ENCODE measurements at regions of chr11 and their contacts with region 1.

Region 1: DNA sequence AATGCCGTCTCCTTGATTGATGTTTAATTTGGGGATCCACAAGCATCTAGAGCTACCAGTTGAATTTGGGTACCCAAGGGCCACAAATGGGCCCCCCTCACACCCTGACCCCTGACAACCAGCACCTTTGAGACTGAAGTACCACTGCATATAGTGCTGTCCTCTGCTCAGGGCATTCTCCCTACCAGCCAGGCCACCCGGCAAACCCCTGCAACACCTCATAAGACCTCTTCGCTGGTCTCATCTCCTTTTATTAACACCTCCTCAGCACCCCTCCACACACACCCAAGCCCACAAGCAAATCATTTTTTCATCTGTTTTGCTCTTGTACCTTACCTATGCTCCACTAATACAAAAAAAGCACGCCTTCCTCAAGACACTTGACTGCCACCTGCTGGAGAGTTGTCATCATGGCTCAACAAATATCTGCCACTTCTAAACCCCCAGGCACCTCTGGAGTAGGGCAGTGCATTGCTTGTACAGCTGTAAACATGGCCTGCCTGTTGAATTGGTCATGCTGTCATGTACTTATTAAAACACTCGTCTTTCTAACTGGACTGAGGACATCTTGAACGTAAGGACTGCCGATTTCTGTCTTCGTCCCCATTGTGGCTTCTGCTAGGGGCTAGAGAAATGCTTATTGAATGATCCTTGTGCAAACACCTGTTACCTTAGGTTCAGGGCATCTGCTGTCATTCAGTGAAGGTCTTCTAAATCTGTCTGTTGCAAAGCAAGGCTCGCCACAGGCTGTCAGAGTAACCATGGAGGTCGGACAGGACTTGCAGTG is 66.5 kb downstream of the BMAL1 start:
- DNase-seq: peak; percentile 84
- ATAC-seq: peak; percentile 53
- H3K4me3 Mint-ChIP-seq: no peak overlapping the region
- H3K27ac Mint-ChIP-seq: peak overlapping the region; percentile 8
- H3K4me1 Mint-ChIP-seq: peaks cover 48% of the 10 kb centered on the region
- H3K27me3 Mint-ChIP-seq: no peaks in the 10 kb centered on the region

Region 2: DNA sequence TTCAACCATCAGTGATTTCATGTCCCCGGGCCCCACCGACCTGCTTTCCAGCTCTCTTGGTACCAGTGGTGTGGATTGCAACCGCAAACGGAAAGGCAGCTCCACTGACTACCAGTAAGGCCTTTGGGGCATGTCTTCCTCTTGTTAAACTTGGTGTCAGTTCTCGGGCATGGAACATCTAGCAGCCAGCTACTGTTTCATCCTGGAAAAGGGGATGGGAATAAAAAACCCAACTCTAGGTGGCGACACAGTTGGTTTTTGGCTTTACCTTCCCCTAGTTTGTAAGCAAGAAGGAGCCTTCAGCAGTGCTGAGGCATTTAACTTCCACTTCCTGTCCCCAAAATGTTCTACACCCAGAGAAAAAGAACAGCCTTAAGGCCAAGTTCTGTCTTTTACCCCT is 10.2 kb after region 1 on chr11:
- CTCF ChIA-PET with region 1: interaction called, 12 read pairs
- DNase-seq: no peak
- ATAC-seq: peak; percentile 16
- H3K4me3 Mint-ChIP-seq: no peak overlapping the region
- H3K27ac Mint-ChIP-seq: no peak overlapping the region
- H3K4me1 Mint-ChIP-seq: peaks cover 2% of the 10 kb centered on the region
- H3K27me3 Mint-ChIP-seq: no peaks in the 10 kb centered on the region

Region 3: DNA sequence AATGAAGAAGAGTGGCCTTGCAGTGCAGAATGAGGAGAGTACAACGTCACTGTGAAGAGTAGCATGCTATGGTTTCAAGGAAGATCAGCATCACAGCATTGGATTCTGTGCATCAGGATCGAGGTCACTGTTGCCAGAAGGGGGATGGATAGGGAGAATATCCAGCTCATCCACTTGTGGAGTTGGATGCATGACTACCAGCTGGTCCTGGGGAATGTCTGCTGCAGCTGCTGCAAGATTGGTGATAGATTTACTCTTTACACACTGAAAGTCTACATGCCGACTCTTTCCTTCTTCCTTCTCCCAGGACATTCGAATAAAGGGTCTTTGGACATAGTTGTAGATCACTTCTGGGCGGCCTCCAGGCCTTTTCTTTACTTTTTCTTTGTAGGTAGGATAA is 44.6 kb after region 1 on chr11:
- CTCF ChIA-PET with region 1: no interaction called
- DNase-seq: no peak
- ATAC-seq: no peak
- H3K4me3 Mint-ChIP-seq: no peak overlapping the region
- H3K27ac Mint-ChIP-seq: no peak overlapping the region
- H3K4me1 Mint-ChIP-seq: no peaks in the 10 kb centered on the region
- H3K27me3 Mint-ChIP-seq: no peaks in the 10 kb centered on the region

Region 4: DNA sequence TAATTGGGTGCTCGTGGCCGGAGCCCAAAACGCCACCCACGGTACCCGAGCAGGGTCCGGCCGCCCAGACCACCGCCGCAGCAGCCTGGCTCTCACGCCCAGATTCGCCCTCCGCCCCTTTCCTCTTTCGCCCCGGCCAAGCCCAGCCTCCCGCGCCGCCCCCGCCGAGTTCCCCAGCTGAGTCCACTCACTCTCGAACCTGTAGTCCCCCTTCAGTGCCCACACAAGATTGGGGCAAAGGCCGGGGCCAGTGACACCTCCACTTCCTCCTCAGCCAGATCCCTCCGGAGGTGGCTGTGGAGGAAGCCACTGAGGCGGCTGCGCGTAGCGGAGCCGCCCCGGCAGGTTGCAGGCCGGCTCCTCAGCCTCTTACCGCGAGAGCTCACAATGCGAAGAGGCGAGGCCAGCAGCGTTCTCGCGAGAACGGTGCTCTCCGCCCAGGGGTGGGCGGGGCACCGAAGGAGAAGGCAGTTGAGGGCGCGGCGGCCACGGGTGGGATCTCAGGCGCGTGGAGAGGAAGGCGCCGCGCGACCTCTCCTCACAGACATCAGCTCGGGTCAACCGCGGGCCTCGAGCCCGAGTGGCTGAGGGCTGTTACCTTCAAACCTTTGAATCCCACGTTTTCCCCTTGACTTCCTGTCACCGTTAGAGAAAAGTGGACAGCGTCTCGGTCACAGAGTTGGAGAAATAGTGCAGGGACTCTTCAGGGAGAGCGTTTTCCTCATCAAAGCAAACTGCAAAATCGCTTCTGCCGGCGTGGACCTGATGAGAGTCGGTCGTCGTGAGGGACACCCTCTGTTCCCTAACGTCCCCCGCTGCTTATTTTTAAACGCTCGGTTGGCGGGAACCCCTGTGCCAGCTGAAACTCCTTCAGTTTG is 119.0 kb after region 1 on chr11 and contains the start of gene BTBD10:
- CTCF ChIA-PET with region 1: no interaction called
- DNase-seq: peak; percentile 95
- ATAC-seq: peak; percentile 99
- H3K4me3 Mint-ChIP-seq: peak within 1 kb of the TSS; percentile 95
- H3K27ac Mint-ChIP-seq: peak within 1 kb of the TSS; percentile 97
- H3K4me1 Mint-ChIP-seq: peaks cover 35% of the 10 kb centered on the region
- H3K27me3 Mint-ChIP-seq: no peaks in the 10 kb centered on the region
- total RNA-seq, gene BTBD10: 19.5 to 23.9 TPM

Measured in activated CD8-positive, alpha-beta memory T cell treated with anti-CD3 and anti-CD28 coated beads, Interleukin-2, amount 10 ng/mL, durations not matched to agents 7 days and 5 days (primary cell).